ENCODE measurements at regions of chr17 and their contacts with region 1.

Region 1: GRCh38 chr17:48791128-48792032 is 25.6 kb downstream of the TTLL6 start:
- DNase-seq: peak; percentile 77 to 82
- ATAC-seq: peak; percentile 70
- H3K4me3 ChIP-seq: no peak overlapping the region
- H3K27ac ChIP-seq: no peak overlapping the region
- H3K4me1 ChIP-seq: no peaks in the 10 kb centered on the region
- H3K27me3 ChIP-seq: no peaks in the 10 kb centered on the region

Region 2: DNA sequence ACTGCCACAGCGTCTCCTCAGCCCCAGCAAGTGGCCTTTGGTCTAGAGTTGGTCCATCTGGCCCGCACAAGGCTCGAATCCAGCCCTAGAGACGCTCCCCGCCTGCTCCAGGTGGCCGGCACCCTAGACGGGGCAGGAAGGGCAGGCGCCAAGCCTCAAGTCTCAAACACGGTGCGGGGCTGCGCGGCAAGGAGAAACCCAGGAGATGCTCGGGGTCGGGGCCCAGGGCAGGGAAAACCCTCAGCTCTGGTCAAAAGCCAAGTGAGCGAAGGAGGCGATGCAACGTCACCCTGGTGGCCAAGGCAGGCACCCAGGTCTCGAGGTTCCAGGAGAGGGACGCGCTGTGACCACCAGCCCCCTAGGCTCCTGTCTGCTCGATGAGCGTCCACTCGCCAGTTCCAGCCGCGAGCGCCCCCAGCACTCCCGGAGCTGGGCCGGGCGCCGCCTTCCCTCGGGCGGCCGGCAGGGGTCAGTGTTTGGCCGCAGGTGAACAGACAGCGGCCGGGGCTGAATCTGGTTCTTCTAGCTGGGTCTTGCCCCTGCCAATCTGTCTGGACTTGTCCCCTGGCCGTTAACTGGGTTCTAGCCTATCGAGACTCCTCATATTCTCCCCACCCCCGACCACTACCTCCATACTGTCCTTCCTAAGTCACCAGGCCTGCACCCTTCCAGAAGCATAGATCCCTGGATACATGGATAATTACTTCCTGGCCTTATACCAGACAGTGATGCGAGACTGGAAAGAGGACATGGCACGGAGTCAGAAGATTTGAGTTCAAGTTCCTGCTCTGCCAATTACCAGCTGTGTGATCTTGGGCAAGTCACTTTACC is 113.0 kb before region 1 on chr17:
- intact Hi-C with region 1: loop called (anchors 1 to 5 kb)
- DNase-seq: peak; percentile 63 to 88
- ATAC-seq: peak; percentile 86
- H3K4me3 ChIP-seq: no peak overlapping the region
- H3K27ac ChIP-seq: no peak overlapping the region
- H3K4me1 ChIP-seq: no peaks in the 10 kb centered on the region
- H3K27me3 ChIP-seq: no peaks in the 10 kb centered on the region

Region 3: GRCh38 chr17:48724251-48725003 is 67.0 kb before region 1 on chr17:
- intact Hi-C with region 1: loop called (anchors 5 kb)
- DNase-seq: peak; percentile 91 to 95
- ATAC-seq: peak; percentile 73
- H3K4me3 ChIP-seq: no peak overlapping the region
- H3K27ac ChIP-seq: no peak overlapping the region
- H3K4me1 ChIP-seq: no peaks in the 10 kb centered on the region
- H3K27me3 ChIP-seq: no peaks in the 10 kb centered on the region